Transverse colon (tissue), 4 donors: ENCODE measurements at regions of chr13 and their contacts with region 1.

Region 1: GRCh38 chr13:49585220-49586157 is at the start of gene RCBTB1:
- DNase-seq: peak; percentile 69
- H3K4me3 ChIP-seq: peak within 1 kb of the TSS; percentile 42 to 91 (median 85)
- H3K27ac ChIP-seq: peak within 1 kb of the TSS; percentile 81 to 90 (median 86)
- H3K4me1 ChIP-seq: peaks cover 0 to 20% (median 14%) of the 10 kb centered on the region in 4 donors
- H3K27me3 ChIP-seq: no peaks in the 10 kb centered on the region
- CTCF ChIP-seq: no peak
- EP300 ChIP-seq: no peak
- POLR2A ChIP-seq: peak; percentile 28
- total RNA-seq, gene RCBTB1: 4.9 to 10.4 (median 7.7) TPM

Region 2: DNA sequence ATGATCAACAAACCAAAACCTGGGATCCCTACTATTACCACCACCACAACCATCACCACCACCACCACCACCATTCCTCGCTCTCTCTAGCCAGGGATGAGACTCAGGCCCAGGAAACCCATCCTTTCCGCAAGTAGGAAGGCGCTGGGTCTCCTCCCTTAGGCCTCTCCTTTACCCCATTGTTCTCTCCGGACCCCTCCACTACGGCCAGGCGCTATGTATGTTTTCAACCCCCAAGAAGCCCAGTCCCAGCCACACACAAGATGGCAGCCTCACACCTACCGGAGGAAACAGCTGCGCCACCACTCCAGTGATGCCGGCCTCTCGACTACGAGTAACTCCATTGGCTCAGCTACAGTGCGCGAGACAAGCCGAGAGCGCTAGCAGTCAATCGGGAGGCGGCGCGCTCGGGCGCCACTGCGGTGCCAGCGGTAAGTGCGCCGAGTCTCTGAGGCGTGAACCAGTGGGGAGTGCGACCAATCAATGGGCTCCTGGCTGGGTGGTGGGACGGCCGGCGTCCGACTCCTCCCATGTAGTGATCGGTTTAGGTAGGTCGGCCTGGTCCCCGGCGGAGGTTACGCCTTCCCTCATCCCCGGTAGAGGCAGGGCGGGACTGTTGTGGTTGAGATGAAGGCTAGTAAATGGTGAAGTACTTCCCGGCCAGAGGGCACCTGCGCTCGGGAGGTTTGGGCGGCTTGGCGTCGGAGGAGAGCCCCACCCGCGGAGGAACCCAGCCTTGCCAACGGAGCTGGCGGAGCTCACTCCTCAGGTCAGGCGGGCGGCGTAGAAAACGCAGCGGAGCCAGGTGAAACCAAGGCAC is 141.6 kb before region 1 on chr13 and contains the starts of genes CAB39L and SETDB2:
- in situ Hi-C with region 1: loop called in 1 of 4 experiments (anchors 10 kb)
- intact Hi-C with region 1: no loop called
- DNase-seq: peak; percentile 99
- H3K4me3 ChIP-seq: peak within 1 kb of the TSS; percentile 71 to 83 (median 75)
- H3K27ac ChIP-seq: peak within 1 kb of the TSS; percentile 96 to 98 (median 96)
- H3K4me1 ChIP-seq: peaks cover 0 to 46% (median 17%) of the 10 kb centered on the region in 4 donors
- H3K27me3 ChIP-seq: no peaks in the 10 kb centered on the region
- CTCF ChIP-seq: peak; percentile 16 to 76 (median 43)
- EP300 ChIP-seq: no peak
- POLR2A ChIP-seq: peak; percentile 93
- total RNA-seq, gene CAB39L: 23.5 to 36.7 (median 25.4) TPM
- total RNA-seq, gene SETDB2: 2.8 to 11.6 (median 8.8) TPM

Region 3: DNA sequence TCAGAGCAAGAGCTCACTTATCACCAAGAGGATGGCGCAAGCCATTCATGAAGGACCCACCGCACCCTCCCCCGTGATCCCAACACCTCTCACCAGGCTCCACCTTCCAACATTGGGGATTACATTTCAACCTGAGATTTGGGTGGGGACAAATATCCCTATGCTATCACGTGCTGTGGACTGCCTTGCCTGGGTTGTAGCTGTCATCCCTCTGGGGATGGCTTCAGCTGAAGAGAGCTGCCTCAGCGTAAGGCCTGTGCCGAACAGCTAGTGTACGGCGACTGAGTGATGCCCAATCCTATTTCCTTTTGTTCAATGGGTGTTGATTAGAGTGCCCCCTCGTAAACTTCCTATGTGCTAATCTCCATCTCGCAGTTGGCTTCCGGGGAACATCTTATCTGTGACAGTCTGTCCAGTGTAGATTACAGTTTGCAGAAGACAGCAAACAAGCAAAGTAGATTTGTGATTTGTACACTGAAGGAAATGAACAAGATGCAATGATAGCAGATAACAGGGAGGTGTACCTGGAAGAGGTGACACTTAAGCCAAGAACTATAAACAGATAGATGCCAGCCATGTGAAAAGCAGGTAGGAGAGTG is 11.7 kb after region 1 on chr13:
- in situ Hi-C with region 1: no loop called
- intact Hi-C with region 1: no loop called
- DNase-seq: no peak
- H3K4me3 ChIP-seq: no peak overlapping the region
- H3K27ac ChIP-seq: no peak overlapping the region
- H3K4me1 ChIP-seq: no peaks in the 10 kb centered on the region
- H3K27me3 ChIP-seq: no peaks in the 10 kb centered on the region
- CTCF ChIP-seq: no peak
- EP300 ChIP-seq: no peak
- POLR2A ChIP-seq: no peak

Region 4: GRCh38 chr13:50170447-50171037 is 585.1 kb after region 1 on chr13:
- in situ Hi-C with region 1: no loop called
- intact Hi-C with region 1: no loop called
- DNase-seq: no peak
- H3K4me3 ChIP-seq: no peak overlapping the region
- H3K27ac ChIP-seq: no peak overlapping the region
- H3K4me1 ChIP-seq: no peaks in the 10 kb centered on the region
- H3K27me3 ChIP-seq: no peaks in the 10 kb centered on the region
- CTCF ChIP-seq: peak in 2 of 5 experiments; percentile 11 to 19
- EP300 ChIP-seq: no peak
- POLR2A ChIP-seq: no peak